ENCODE measurements at regions of chr4 and their contacts with region 1.

Region 1: GRCh38 chr4:145061318-145061920 is 36.6 kb downstream of the ANAPC10 start:
- DNase-seq: no peak
- H3K4me3 Mint-ChIP-seq: no peak overlapping the region
- H3K27ac Mint-ChIP-seq: no peak overlapping the region
- H3K4me1 Mint-ChIP-seq: peaks cover 20% of the 10 kb centered on the region
- H3K27me3 Mint-ChIP-seq: no peaks in the 10 kb centered on the region

Region 2: GRCh38 chr4:144355809-144356757 is 705.3 kb before region 1 on chr4:
- intact Hi-C with region 1: loop called (anchors 10 kb)
- DNase-seq: no peak
- H3K4me3 Mint-ChIP-seq: no peak overlapping the region
- H3K27ac Mint-ChIP-seq: no peak overlapping the region
- H3K4me1 Mint-ChIP-seq: no peaks in the 10 kb centered on the region
- H3K27me3 Mint-ChIP-seq: peaks cover 14% of the 10 kb centered on the region

Region 3: DNA sequence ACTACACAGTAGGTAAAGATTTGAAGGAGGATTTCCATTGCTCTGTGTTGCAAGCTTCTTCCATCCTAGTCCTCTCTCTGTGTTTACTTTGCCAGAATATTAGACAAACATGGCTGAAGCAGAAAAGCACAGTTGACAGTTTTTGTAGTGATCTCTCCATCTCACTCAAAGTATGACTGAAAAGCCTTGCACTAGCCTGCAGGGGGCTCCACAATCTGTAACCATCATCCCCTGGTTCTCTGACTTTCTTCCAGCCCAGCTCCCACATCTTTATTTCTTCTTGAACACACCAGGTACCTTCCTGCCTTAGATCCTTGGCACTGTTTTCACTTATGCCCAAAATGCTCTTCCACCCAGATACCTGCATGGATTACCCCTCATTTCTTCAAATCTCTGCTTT is 449.6 kb before region 1 on chr4:
- intact Hi-C with region 1: loop called (anchors 5 kb)
- DNase-seq: no peak
- H3K4me3 Mint-ChIP-seq: no peak overlapping the region
- H3K27ac Mint-ChIP-seq: no peak overlapping the region
- H3K4me1 Mint-ChIP-seq: no peaks in the 10 kb centered on the region
- H3K27me3 Mint-ChIP-seq: no peaks in the 10 kb centered on the region

Region 4: DNA sequence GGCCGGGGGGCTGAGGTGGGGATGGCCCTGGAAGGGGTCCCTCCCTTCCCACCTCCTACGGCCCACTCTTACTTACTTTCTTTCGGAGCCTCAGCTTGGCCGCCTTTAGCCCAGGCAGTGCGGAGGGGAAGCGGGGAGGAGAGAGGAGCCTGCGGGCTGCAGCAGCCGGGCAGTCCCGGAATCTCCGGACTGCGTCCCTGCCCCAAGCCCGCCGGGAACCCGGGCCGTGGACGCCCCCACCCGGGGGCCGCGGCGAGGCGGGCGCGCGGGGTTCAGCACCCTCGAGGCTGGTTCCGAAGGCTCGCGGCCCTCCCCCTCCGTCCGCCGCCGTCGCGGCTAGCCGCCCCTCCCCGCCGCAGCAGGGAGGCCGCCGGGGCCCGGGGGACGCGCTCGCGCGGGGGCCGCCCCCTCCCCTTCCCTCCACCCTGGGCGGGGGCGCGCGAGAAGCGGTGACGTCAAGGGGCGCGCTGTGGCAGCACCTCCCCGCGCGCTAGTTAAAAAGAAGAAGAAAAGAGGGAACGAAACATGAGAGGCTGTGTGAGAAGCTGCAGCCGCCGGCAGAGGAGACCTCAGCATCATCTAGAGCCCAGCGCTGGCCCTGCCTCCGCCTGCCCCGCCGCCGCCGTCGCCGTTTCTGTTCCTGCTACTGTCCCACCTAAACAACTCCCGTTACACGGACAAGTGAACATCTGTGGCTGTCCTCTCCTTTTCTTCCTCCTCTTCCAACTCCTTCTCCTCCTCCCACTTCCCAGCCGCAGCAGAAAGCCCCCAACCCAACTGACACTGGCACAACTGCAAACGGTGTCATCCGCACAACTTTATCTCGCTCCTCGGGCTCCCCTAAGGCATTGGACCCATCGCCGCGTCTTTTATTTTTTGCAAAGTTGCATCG is 415.5 kb before region 1 on chr4 and contains the start of gene HHIP:
- intact Hi-C with region 1: loop called (anchors 10 kb)
- DNase-seq: no peak
- H3K4me3 Mint-ChIP-seq: peak within 1 kb of the TSS; percentile 88
- H3K27ac Mint-ChIP-seq: no peak within 1 kb of the TSS
- H3K4me1 Mint-ChIP-seq: peaks cover 23% of the 10 kb centered on the region
- H3K27me3 Mint-ChIP-seq: peaks cover 47% of the 10 kb centered on the region
- total RNA-seq, gene HHIP: not detected in 2 replicates

Region 5: GRCh38 chr4:144787365-144788258 is 273.8 kb before region 1 on chr4:
- intact Hi-C with region 1: loop called (anchors 2 kb)
- DNase-seq: no peak
- H3K4me3 Mint-ChIP-seq: no peak overlapping the region
- H3K27ac Mint-ChIP-seq: no peak overlapping the region
- H3K4me1 Mint-ChIP-seq: no peaks in the 10 kb centered on the region
- H3K27me3 Mint-ChIP-seq: no peaks in the 10 kb centered on the region

Region 6: DNA sequence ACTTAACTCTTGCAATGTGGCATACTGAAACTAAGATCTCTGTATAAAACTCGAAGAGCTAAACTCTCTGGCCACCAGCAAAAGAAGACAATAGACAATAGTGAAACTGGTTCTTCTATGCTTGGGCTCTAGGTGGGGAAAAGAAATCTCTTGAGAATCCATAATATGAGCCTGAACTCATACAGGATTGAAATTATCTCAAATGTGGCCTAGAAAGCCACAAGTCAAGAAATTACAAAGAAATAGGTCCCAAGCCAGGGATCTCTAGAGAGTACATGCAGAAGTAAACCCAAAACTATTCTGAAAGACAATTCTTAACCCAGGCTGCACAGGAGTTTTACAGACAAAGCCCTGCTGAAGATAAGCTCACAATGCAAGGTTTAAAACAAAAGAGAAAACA is 90.8 kb before region 1 on chr4:
- intact Hi-C with region 1: loop called (anchors 5 kb)
- DNase-seq: no peak
- H3K4me3 Mint-ChIP-seq: no peak overlapping the region
- H3K27ac Mint-ChIP-seq: no peak overlapping the region
- H3K4me1 Mint-ChIP-seq: no peaks in the 10 kb centered on the region
- H3K27me3 Mint-ChIP-seq: peaks cover 2% of the 10 kb centered on the region

Region 7: DNA sequence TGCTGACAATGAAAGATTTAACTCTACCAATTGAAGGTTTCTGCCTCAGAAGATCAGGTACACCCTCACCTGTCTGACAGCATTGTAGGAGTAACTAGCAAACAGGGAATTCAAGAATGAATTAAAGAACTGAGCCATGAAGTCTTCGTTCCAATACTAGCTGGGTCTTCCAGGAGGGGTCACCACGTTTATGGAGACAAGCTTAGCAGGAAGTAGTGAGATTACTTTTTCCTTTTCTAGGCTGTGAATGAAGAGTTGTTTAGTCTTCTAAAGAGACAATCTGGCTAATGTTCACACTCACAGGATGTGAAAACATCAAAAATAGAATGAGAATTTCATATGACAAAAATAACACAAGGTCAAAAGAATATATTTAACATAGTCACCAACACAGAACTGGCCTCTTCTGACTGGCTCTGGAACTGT is 1207.8 kb after region 1 on chr4:
- intact Hi-C with region 1: no loop called
- DNase-seq: no peak
- H3K4me3 Mint-ChIP-seq: no peak overlapping the region
- H3K27ac Mint-ChIP-seq: no peak overlapping the region
- H3K4me1 Mint-ChIP-seq: no peaks in the 10 kb centered on the region
- H3K27me3 Mint-ChIP-seq: no peaks in the 10 kb centered on the region

Measured in activated T-helper 1 cell treated with anti-CD3 and anti-CD28 coated beads, Interleukin-12 subunit alpha, Interleukin-12 subunit beta, Interleukin-2, Interleukin-4 antibody, amounts not matched to agents 30 ng/mL and 10 ng/mL and 1 ng/mL, durations not matched to agents 14 hours and 24 hours and 36 hours (primary cell).